A549 (cell line): ENCODE measurements at regions of chr17 and their contacts with region 1.

Region 1: DNA sequence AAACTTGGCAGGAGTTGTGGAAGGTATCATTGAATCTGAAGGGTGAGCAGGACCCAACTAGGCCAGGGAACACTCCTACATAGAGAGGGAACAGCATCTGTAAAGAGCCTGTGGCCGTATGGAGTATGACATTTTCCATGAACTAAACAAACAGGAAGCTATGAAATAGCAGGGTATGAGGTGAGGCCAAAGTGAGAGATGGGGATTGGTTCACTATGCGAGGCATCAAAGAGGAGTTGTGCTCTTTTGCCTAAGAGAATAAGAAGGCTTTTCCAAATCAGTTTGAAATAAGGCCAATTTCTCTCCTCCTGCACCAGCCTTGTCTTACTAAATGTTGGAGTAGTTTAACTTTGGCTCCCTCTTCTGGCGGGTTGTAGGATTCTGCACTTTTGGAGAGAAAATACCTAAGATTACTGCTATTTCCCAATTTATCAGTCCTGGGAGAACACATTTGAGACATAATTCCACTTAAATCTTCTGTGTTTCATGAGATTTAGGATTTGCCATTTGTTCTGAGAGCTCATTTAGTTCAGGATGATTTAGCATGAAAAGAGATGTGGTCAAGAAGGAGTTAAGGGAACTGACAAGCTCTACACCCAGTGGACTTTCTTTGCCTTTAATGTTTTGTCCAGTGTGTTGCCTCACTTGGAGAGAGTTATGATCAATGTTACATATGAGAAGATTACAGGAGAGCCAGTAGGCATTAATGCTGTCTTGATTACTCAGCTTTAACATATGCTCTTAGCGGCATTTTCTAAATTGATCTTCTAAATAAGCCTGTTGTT is 55.4 kb downstream of the TNRC6C start:
- DNase-seq: peak; percentile 56 to 73
- ATAC-seq: peak; percentile 90 to 91
- H3K4me3 ChIP-seq: no peak overlapping the region
- H3K27ac ChIP-seq: no peak overlapping the region
- H3K4me1 ChIP-seq: no peaks in the 10 kb centered on the region
- CTCF ChIP-seq: peak; percentile 98
- EP300 ChIP-seq: no peak
- POLR2A ChIP-seq: no peak
- RAD21 ChIP-seq: peak; percentile 96 to 97

Region 2: DNA sequence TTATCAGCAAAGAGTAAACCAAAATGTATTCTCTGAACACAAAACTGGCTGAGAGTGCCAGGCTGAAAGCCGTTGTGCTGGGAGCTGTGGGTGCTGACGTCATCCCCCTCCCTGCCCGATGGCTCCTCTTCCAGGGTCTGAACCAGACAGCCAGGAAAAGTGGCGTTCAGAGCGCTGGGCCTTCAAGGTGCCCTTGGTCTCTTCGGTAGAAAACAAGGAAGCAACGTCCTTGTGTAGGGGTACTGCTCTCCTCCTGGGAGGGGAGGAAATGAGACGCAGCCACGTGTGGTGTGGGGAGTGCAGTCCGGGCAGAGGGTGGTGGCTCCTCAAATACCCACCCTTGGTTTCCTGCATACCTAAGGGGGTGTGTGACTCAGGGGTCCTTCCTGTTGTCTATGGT is 478.4 kb before region 1 on chr17:
- CTCF ChIA-PET with region 1: interaction called, 316 read pairs
- POLR2A ChIA-PET with region 1: no interaction called
- DNase-seq: no peak
- ATAC-seq: no peak; a peak in 1 of 6 replicates
- H3K4me3 ChIP-seq: no peak overlapping the region
- H3K27ac ChIP-seq: no peak overlapping the region
- H3K4me1 ChIP-seq: peaks cover 5% of the 10 kb centered on the region; the same call in 1 of the 3 replicates
- CTCF ChIP-seq: no peak
- EP300 ChIP-seq: no peak
- POLR2A ChIP-seq: no peak
- RAD21 ChIP-seq: no peak

Region 3: GRCh38 chr17:77772461-77772897 is 241.4 kb before region 1 on chr17:
- CTCF ChIA-PET with region 1: interaction called, 59 read pairs
- POLR2A ChIA-PET with region 1: no interaction called
- DNase-seq: peak; percentile 60 to 86
- ATAC-seq: peak; percentile 82 to 96
- H3K4me3 ChIP-seq: no peak overlapping the region
- H3K27ac ChIP-seq: 0 out of 6 replicates have a peak overlapping the region, but pooled peaks of 1 of the 2 experiments have one; percentile 23
- H3K4me1 ChIP-seq: no peaks in the 10 kb centered on the region
- CTCF ChIP-seq: peak; percentile 52
- EP300 ChIP-seq: no peak
- POLR2A ChIP-seq: no peak
- RAD21 ChIP-seq: peak; percentile 70 to 79

Region 4: DNA sequence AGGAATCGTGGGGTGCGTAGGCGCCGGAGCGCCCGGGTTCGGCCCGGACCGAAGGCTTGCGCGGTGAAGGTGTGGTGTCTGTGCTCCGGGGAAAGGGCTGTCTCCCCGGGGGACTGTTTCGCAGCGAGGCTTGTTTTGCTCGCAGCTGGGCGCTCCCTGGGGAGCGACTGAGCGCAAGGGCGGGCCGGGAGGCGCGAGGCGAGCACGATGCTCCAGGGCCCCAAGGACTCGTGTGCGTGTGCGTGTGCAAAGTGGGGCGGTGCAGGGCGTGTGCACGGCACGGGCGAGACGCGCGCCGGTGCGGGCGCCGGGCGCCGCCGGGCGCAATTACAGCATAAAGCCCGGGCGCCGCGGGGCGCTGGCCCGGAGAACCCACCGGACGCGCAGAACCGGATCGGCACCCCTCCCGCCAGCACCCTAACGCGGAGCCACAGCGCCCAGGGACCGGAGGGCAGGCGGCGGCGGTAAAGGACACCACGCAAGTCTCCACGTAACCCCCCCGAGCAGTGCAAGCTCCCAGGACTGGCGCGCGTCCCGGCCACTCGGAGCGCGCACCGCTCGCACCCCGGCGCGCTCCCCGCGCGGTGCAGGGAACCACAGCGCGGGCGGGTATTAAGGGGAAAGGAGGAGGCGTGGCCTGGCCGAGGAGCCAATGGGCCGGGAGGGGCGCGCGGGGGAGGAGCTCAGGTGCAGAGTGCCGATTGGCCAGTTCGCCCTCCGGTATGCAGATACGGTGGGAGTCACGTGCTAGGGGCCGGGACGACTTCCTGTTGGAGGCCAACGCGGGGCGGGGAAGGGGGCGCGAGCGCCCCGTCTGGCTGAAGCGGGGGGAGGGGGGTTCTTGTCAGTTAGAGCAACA is 55.8 kb before region 1 on chr17 and contains the start of gene TNRC6C:
- CTCF ChIA-PET with region 1: interaction called, 14 read pairs
- POLR2A ChIA-PET with region 1: interaction called, 25 read pairs
- DNase-seq: peak; percentile 100
- ATAC-seq: peak; percentile 93 to 98
- H3K4me3 ChIP-seq: peak within 1 kb of the TSS; percentile 81
- H3K27ac ChIP-seq: peak within 1 kb of the TSS; percentile 74 to 91
- H3K4me1 ChIP-seq: peaks cover 5% of the 10 kb centered on the region; the same call in 2 of the 3 replicates
- CTCF ChIP-seq: 0 out of 3 replicates have a peak, but pooled peaks have one; percentile 12
- EP300 ChIP-seq: no peak
- POLR2A ChIP-seq: peak; percentile 100
- RAD21 ChIP-seq: no peak; a peak in 1 of 5 replicates
- polyA plus RNA-seq, gene TNRC6C: 1.3 and 3.4 TPM in 2 replicates

Region 5: DNA sequence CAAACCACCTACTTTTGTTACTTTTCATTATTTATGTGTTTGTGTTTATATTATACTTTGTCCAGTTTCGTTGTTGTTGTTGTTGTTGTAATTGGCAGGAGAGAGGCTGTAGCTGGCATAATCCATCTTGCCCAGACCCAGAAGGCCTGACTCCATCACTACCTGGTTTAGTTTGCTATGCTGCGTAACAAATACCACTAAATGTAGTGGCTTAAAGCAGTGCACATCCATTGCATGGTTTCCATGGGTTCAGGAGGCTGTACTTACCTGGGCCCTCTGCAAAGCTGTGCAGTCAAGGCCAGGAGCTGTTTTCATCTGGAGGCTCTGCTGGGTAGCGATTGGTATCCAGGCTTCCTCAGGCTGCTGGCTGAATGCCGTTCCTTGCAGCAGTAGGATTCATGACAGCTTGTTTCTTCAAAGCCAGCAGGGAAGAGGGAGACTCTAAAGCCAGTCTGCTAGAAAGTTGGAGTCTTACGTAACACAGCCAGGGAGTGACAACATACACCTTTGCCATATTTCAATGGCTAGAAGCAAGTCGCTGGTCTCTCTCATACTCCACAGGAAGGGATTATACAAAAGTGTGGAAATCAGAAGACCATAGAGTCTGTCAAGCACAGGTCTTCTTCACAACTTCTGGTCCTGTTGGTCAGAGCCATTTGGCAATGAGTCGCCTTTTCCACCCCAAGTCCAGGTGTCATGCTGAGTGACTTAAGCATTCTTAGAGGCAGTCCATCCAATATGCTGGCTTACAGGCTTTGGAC is 14.3 kb before region 1 on chr17:
- CTCF ChIA-PET with region 1: interaction called, 72 read pairs
- POLR2A ChIA-PET with region 1: no interaction called
- DNase-seq: no peak
- ATAC-seq: no peak
- H3K4me3 ChIP-seq: no peak overlapping the region
- H3K27ac ChIP-seq: no peak overlapping the region
- H3K4me1 ChIP-seq: no peaks in the 10 kb centered on the region
- CTCF ChIP-seq: no peak
- EP300 ChIP-seq: no peak
- POLR2A ChIP-seq: no peak
- RAD21 ChIP-seq: no peak

Region 6: DNA sequence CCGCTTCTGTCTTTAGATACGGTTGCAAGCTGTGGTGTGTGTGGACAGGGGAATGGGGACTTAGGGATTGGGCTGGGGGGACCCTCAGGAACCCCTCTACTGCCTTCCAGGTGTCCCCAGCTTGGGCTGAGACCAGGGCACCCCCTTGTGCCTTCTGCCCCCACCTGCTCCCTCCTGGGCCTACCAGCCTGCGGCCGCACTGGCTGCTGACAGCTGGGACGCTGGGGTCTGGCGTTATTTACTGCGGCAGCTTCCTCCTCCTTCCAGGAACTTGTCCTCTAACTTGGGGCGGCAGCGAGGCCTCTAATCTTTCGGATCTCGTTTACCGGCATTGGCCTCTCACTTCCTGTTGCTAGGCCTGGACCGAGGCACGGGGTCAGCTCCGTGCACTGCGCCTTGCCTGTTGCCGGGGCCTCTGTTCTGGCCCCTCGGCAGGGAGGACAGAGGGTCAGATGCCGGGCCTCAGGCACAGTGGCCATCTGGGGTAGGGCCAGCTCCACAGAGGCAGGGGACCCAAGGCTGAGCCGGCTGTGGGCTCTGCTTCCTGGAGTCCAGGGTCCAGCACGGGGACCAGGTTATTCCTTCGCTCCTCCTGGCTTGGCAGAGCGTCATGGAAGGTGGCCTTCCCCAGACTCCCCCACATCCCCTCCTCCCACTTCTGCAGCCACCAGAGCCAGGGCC is 249.3 kb after region 1 on chr17:
- CTCF ChIA-PET with region 1: no interaction called
- POLR2A ChIA-PET with region 1: no interaction called
- DNase-seq: no peak
- ATAC-seq: no peak
- H3K4me3 ChIP-seq: no peak overlapping the region
- H3K27ac ChIP-seq: no peak overlapping the region
- H3K4me1 ChIP-seq: peaks cover 6% of the 10 kb centered on the region; the same call in 1 of the 3 replicates
- CTCF ChIP-seq: no peak
- EP300 ChIP-seq: no peak
- POLR2A ChIP-seq: no peak
- RAD21 ChIP-seq: no peak

Region 7: DNA sequence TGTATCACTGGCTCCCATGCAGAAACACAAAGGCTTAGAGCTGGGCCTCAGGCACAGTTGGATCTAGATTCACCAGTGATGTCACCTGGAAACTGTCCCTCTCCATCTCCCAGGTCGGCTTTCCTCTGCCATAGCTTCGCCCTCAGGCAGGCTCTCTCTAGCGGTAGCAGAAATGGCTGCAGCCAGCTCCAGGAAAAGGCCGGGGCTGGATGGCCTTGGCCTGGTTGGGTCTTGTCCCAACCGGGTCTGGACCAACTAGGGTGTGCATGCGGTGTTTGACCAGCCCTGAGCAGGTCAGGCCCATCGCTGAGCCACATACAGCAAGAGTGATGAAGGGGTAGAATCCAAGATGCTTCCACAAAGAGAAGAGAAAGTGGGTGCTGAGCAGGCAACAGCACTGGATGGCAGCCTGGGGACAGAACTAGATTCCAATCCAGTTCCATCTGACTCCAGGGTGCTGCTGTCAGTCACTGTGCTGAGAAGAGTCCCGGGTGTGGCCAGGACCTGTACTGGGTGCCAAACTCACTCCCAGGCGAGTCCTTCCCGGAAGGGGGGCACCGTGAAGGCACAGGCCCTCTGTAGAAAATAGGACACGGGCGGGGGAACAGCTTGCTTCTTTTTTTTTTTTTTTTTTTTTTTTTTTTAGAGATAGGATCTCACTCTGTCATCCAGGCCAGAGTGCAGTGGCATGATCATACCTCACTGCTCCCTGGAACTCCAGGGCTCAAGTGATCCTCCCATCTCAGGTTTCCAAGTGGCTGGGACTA is 294.2 kb after region 1 on chr17:
- CTCF ChIA-PET with region 1: no interaction called
- POLR2A ChIA-PET with region 1: no interaction called
- DNase-seq: no peak
- ATAC-seq: peak; percentile 38 to 51; a peak in 4 of 6 replicates
- H3K4me3 ChIP-seq: no peak overlapping the region
- H3K27ac ChIP-seq: peak overlapping the region in 1 of 2 experiments; percentile 51; a peak in 2 of 6 replicates
- H3K4me1 ChIP-seq: peaks cover 14% of the 10 kb centered on the region
- CTCF ChIP-seq: no peak
- EP300 ChIP-seq: no peak
- POLR2A ChIP-seq: no peak
- RAD21 ChIP-seq: no peak